AG04449 (cell line): ENCODE measurements at regions of chr5 and their contacts with region 1.

Region 1: DNA sequence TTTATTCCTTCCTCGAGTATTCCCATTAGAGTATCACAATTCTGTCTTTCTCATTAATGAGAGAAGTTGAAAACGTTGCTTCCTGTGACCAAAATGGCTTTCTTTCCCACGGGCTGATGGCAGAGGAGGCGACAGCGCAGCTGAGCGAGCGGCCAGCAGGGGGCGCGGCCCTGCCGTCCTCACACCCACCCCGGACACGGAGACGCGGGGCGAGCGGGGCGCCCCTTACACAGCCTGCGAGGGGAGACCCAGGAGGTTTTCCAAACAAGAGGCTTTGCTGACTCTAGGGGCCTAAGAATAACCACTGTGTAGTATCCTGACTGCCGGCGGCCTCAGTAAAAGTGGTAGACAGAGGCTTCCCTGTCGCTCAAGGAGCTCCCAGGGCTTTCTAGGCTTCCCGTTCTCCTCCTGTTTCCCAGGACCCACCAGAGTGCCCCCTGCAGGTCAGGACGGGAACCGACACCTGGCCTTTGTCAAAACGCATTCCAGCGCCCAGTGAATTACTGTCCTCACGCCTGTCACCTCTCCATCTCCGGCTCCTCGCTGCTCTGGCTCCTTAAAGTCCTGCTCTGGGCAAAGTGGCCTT is 27.3 kb upstream of the FGF1 start:
- DNase-seq: no peak
- H3K4me3 ChIP-seq: peak overlapping the region; percentile 75
- CTCF ChIP-seq: peak; percentile 98

Region 2: DNA sequence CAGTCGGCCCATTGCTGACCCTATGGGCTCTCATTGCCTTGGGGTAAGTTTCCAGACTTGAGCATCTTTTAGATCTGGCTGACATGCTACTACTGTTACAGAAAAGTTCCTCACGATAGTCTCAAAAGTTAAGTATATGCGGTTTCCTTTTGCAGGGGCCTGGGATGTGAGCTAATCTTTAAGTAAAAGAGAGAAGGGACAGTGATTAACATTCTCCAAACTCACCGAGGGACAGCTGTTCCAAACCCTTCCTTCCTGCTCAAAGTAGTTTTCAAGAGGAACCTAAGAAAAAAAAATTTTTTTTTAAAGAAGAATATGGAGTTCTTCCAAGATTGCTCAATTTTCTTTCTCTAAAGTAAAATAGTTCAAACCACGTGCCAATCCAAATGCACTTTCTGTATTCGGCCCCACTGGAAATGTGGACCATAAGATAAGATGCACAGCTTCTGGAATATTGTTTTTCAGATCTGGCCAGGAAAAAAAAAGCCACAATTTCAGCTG is 220.4 kb before region 1 on chr5:
- CTCF ChIA-PET with region 1: no interaction called
- POLR2A ChIA-PET with region 1: no interaction called
- DNase-seq: no peak
- H3K4me3 ChIP-seq: no peak overlapping the region
- CTCF ChIP-seq: no peak

Region 3: GRCh38 chr5:142597546-142598341 is 115.5 kb before region 1 on chr5:
- CTCF ChIA-PET with region 1: interaction called, 235 read pairs
- POLR2A ChIA-PET with region 1: no interaction called
- DNase-seq: no peak
- H3K4me3 ChIP-seq: no peak overlapping the region
- CTCF ChIP-seq: no peak

Region 4: DNA sequence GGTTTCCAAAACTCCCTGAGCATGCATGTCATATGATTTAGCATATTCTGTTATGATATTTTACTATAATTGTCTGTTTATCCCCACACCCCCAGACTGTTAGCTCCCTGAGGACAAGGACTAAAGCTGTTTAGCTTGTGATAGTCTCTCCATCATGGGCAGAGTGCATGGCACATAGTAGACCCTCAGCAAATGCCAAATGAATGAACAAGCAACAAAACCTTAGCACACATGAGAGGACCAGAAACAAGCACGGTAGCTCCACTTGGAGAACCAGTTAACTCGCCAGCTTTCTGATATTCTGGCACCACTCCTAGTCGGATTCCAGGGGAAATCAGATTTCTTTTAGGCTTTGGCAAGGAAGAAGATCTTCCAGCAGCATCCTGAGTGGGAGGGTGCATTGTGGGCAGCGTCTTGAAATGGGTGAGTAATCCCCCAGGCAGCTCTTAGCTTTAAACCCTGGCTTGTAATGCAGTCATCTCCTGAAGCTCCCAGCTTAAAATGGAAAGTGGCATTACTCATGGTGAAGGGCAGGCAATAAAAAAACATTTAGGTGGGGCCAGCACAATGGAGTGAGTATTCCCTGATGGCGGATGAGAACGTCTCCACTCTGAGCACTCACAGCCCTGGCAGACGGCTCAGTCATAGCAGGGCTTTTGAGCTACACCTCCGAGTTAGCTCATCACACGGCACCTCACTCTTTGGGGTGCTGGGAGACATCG is 68.4 kb before region 1 on chr5:
- CTCF ChIA-PET with region 1: interaction called, 172 read pairs
- POLR2A ChIA-PET with region 1: no interaction called
- DNase-seq: peak; percentile 99
- H3K4me3 ChIP-seq: peak overlapping the region; percentile 42
- CTCF ChIP-seq: no peak

Region 5: DNA sequence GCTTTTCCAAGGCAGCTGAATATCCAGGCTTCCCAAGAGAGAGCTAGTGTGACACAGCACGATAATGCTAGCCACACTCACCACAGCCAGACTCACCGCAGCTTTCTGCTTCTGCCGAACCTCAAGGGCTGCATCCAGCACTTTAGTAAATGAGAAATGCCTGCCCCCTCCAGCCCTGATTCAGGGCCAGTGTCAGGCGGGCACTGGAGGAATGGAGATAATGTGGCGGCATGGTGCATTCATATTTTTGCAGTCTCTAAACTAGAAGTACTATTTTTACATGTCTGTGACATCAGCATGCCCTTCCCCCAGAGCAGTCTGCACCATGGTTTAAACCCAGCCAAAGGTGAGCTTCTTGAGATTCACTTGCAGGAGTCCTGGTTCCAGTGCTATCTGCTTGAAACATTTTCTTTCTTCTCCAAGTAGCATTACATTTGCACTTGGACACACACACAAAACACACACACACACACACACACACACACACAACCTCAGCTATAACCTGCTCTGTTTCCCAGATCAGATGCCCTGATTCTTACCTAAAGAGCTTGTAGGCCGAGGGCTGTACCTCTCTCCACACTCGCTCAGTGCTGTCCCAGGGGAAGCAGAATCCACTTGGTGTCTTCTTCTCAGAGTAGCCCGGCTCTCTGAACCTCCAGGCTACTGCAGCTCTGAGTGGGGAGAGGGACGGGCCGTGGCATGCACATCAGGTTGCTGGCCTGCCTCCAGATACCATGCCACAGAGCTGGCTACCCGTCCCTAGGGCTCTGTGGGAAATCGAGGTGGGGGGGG is 27.6 kb before region 1 on chr5 and contains the start of gene FGF1:
- CTCF ChIA-PET with region 1: interaction called, 19 read pairs
- POLR2A ChIA-PET with region 1: no interaction called
- DNase-seq: no peak
- H3K4me3 ChIP-seq: no peak within 1 kb of the TSS
- CTCF ChIP-seq: no peak

Region 6: GRCh38 chr5:142748568-142749249 is 35.5 kb after region 1 on chr5:
- CTCF ChIA-PET with region 1: interaction called, 87 read pairs
- POLR2A ChIA-PET with region 1: no interaction called
- DNase-seq: no peak
- H3K4me3 ChIP-seq: no peak overlapping the region
- CTCF ChIP-seq: no peak

Region 7: GRCh38 chr5:142847881-142848790 is 134.9 kb after region 1 on chr5:
- CTCF ChIA-PET with region 1: interaction called, 23 read pairs
- POLR2A ChIA-PET with region 1: no interaction called
- DNase-seq: peak; percentile 34
- H3K4me3 ChIP-seq: no peak overlapping the region
- CTCF ChIP-seq: no peak

Region 8: DNA sequence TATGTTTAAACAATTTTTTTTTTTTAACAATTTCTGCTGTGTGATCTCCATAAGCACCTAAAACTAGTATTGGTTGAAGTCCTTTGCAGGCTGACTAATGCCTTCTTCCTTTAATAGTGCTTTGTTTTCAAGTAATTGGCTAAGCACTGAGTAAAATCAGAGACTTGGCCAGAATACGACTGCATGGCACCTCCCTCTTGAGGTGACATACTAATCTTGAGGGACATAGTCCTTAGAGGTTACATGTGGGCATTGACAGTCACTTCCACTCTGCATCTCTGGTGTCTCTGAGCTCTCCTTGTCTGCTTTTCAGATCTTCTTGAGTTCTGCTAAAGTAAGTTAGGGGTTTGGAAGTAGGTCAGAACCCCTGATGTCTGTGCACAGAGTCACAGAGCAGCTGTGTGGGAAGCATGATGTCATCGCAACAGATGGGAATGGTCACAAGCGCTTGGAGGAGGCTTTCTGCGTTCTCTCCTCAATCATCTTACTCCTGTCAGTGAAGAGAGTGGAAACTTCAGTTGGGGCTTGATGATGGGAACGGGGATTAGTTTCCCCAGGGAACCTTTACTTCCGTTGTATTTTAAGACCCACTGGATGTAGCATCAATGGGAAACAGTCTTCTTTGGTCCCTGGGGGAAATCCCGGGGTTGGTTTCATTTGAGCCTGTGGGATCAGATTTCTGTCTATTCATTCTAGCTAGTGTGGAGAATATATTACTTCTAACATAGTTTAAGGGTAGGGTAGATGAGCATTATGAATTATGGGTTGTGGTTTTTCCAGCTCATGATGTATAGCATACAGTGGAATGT is 193.9 kb after region 1 on chr5:
- CTCF ChIA-PET with region 1: interaction called, 38 read pairs
- POLR2A ChIA-PET with region 1: no interaction called
- DNase-seq: no peak
- H3K4me3 ChIP-seq: no peak overlapping the region
- CTCF ChIP-seq: no peak